CD8-positive, alpha-beta memory T cell (primary cell): ENCODE measurements at regions of chr1 and their contacts with region 1.

Region 1: GRCh38 chr1:200510228-200510623 is 100.4 kb upstream of the ZNF281 start:
- DNase-seq: peak; percentile 41 to 77 (median 51)
- H3K4me3 ChIP-seq: no peak overlapping the region
- H3K4me3 Mint-ChIP-seq: no peak overlapping the region
- H3K27ac ChIP-seq: no peak overlapping the region
- H3K27ac Mint-ChIP-seq: no peak overlapping the region
- H3K4me1 ChIP-seq: no peaks in the 10 kb centered on the region
- H3K4me1 Mint-ChIP-seq: peaks cover 0 to 3% (median 0%) of the 10 kb centered on the region in 3 donors
- H3K27me3 ChIP-seq: no peaks in the 10 kb centered on the region
- H3K27me3 Mint-ChIP-seq: peaks cover 3 to 25% of the 10 kb centered on the region in 2 donors

Region 2: GRCh38 chr1:200538179-200538578 is 28.0 kb after region 1 on chr1:
- CTCF ChIA-PET with region 1: interaction called, 11 read pairs
- POLR2A ChIA-PET with region 1: no interaction called
- DNase-seq: no peak
- H3K4me3 ChIP-seq: no peak overlapping the region
- H3K4me3 Mint-ChIP-seq: no peak overlapping the region
- H3K27ac ChIP-seq: no peak overlapping the region
- H3K27ac Mint-ChIP-seq: no peak overlapping the region
- H3K4me1 ChIP-seq: no peaks in the 10 kb centered on the region
- H3K4me1 Mint-ChIP-seq: peaks cover 0 to 3% (median 3%) of the 10 kb centered on the region in 3 donors
- H3K27me3 ChIP-seq: no peaks in the 10 kb centered on the region
- H3K27me3 Mint-ChIP-seq: peaks cover 2 to 3% of the 10 kb centered on the region in 2 donors